IMR-90 (cell line): ENCODE measurements at regions of chr12 and their contacts with region 1.

Region 1: GRCh38 chr12:724194-724855 is 28.1 kb upstream of the WNK1 start:
- DNase-seq: no peak
- ATAC-seq: peak; percentile 46; the same call in 1 of the 2 replicates
- H3K4me3 ChIP-seq: no peak overlapping the region
- H3K27ac ChIP-seq: no peak overlapping the region
- H3K4me1 ChIP-seq: no peaks in the 10 kb centered on the region
- H3K27me3 ChIP-seq: peaks cover 1% of the 10 kb centered on the region
- CTCF ChIP-seq: no peak
- POLR2A ChIP-seq: no peak
- RAD21 ChIP-seq: no peak

Region 2: GRCh38 chr12:662566-663292 is 61.6 kb before region 1 on chr12:
- CTCF ChIA-PET with region 1: no interaction called
- POLR2A ChIA-PET with region 1: no interaction called
- dilution Hi-C with region 1: no loop called
- in situ Hi-C with region 1: no loop called
- intact Hi-C with region 1: loop called (anchors 10 kb)
- DNase-seq: no peak
- ATAC-seq: peak; percentile 14
- H3K4me3 ChIP-seq: no peak overlapping the region
- H3K27ac ChIP-seq: no peak overlapping the region
- H3K4me1 ChIP-seq: no peaks in the 10 kb centered on the region
- H3K27me3 ChIP-seq: peaks cover 37% of the 10 kb centered on the region
- CTCF ChIP-seq: no peak
- POLR2A ChIP-seq: no peak
- RAD21 ChIP-seq: no peak